Mammary epithelial cell (primary cell): ENCODE measurements at regions of chr1 and their contacts with region 1.

Region 1: DNA sequence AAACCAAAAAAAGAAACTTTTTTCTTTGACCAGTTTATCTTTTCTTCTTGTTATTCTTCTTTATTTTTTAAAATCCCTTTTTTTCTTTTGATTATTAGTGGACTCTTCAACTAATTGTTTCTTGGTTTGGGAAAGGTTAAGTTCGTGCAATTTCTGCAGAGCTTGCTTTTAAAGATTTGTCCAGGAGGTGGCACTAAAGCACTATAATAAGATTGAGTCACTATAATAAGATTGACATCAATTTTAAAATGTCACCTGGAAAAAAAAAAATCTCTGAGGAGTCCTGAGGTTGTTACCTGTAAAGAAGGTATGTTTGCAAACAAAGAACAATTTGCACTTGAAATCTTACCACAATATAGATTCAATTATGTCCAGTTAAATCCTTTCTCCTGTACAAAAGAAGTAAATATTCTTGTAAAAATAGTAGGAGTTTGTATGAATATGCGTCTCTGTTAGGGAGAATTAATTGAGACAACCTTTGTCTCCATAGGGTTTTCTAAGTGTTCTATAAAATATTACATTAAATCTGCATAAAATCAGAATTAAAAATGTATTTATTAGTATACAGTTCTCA is 166.7 kb downstream of the ADGRL4 start:
- DNase-seq: peak; percentile 20
- H3K4me3 ChIP-seq: no peak overlapping the region
- H3K27ac ChIP-seq: no peak overlapping the region
- H3K4me1 ChIP-seq: peaks cover 5% of the 10 kb centered on the region
- H3K27me3 ChIP-seq: no peaks in the 10 kb centered on the region
- CTCF ChIP-seq: peak; percentile 47 to 57

Region 2: DNA sequence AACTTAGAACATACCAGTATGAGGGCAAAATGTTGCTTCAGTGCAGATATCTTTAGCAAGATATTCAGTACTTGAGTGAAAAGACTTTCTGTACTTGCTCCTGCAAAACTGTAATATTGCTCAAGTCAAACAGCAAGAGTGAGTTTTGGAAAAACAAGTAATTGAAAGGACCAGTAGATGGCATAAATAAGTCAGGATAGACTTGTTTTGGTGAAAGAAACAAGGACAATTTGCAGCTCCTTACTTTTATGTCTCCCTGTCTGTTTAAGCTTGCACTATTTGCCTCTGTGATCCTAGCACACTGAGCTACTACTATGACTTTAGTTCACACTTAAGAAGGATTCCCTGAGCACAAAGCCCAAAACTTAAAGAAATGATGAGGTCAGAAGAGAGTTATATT is 151.1 kb before region 1 on chr1:
- CTCF ChIA-PET with region 1: no interaction called
- dilution Hi-C with region 1: no loop called
- in situ Hi-C with region 1: no loop called
- intact Hi-C with region 1: loop called (anchors 2 kb)
- DNase-seq: peak; percentile 29
- H3K4me3 ChIP-seq: no peak overlapping the region
- H3K27ac ChIP-seq: no peak overlapping the region
- H3K4me1 ChIP-seq: peaks cover 11% of the 10 kb centered on the region
- H3K27me3 ChIP-seq: no peaks in the 10 kb centered on the region
- CTCF ChIP-seq: peak in 1 of 2 donors; percentile 43

Region 3: DNA sequence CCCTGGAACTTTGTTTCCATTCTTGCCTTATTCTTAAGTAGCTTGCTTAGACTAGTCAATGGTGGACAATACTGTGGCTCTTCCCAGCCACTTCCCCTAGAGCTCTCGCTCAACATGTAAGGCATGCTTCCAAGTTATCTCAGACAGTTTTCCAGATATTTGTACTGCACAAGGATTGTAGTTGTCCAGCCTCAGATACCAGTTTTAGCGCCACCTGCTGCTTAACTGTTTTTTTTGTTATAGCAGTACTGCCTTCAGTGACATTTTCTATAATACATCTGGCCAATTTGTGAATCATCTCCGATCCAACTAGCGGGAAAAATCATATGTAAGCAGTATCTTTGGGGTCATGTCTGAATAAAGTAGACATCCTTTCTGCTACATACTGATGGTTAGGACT is 513.4 kb after region 1 on chr1:
- CTCF ChIA-PET with region 1: no interaction called
- dilution Hi-C with region 1: no loop called
- in situ Hi-C with region 1: loop called (anchors 25 kb)
- intact Hi-C with region 1: loop called (anchors 1 kb)
- DNase-seq: peak; percentile 36
- H3K4me3 ChIP-seq: no peak overlapping the region
- H3K27ac ChIP-seq: no peak overlapping the region
- H3K4me1 ChIP-seq: no peaks in the 10 kb centered on the region
- H3K27me3 ChIP-seq: peaks cover 4% of the 10 kb centered on the region
- CTCF ChIP-seq: peak; percentile 60